Calu3 (cell line): ENCODE measurements at regions of chr11 and their contacts with region 1.

Region 1: GRCh38 chr11:66659763-66660162 is 17.9 kb downstream of the RBM4B start:
- DNase-seq: no peak
- H3K4me3 Mint-ChIP-seq: no peak overlapping the region
- H3K27ac Mint-ChIP-seq: peak overlapping the region; percentile 52
- H3K4me1 Mint-ChIP-seq: no peaks in the 10 kb centered on the region
- H3K27me3 Mint-ChIP-seq: no peaks in the 10 kb centered on the region
- CTCF ChIP-seq: no peak

Region 2: GRCh38 chr11:66616379-66617154 is 43.2 kb before region 1 on chr11 and contains the start of gene RBM14:
- CTCF ChIA-PET with region 1: interaction called, 11 read pairs
- intact Hi-C with region 1: no loop called
- DNase-seq: peak; percentile 99
- H3K4me3 Mint-ChIP-seq: peak within 1 kb of the TSS; percentile 99
- H3K27ac Mint-ChIP-seq: peak within 1 kb of the TSS; percentile 99
- H3K4me1 Mint-ChIP-seq: peaks cover 22% of the 10 kb centered on the region
- H3K27me3 Mint-ChIP-seq: no peaks in the 10 kb centered on the region
- CTCF ChIP-seq: no peak
- total RNA-seq, gene RBM14: 102 and 107 TPM in 2 replicates

Region 3: DNA sequence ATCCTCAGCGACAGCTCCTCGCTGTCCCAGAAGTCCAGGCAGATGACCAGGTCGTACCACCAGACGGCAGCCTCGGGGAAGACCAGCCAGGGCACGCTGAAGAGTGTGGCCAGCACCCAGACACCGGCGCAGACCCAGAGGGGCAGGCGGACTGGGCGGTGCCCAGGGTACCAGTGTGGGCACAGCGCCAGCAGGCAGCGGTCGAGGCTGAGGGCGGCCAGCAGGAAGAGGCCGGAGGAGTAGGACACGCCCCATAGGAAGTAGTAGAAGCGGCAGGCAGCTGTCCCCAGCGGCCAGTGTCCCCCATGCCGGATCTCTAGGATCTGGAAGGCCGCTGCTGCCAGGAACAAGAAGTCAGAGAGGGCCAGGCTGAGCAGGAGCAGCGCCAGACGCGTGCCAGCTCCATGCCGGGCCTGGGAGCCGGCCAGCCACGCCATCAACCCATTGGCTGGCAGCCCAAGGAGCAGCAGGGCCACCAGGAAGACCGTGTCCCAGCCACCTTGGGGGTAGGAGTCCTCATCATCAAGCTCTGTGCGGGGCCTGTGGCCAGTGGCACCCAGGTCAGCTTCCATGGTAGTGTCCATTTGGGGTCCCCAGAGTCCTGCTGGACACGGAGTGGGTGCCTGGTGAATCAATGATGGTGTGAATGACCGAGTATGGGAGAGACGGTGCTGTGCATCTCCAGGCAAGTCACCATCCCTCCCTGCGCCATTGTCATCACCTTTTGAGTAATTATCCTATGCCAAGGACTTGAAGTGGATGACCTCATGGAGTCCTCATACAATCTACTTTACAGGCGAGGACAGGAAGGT is 792.6 kb after region 1 on chr11 and contains the start of gene GPR152:
- CTCF ChIA-PET with region 1: no interaction called
- intact Hi-C with region 1: no loop called
- DNase-seq: peak; percentile 90
- H3K4me3 Mint-ChIP-seq: peak within 1 kb of the TSS; percentile 75
- H3K27ac Mint-ChIP-seq: peak within 1 kb of the TSS; percentile 78
- H3K4me1 Mint-ChIP-seq: peaks cover 15% of the 10 kb centered on the region
- H3K27me3 Mint-ChIP-seq: no peaks in the 10 kb centered on the region
- CTCF ChIP-seq: no peak
- total RNA-seq, gene GPR152: not detected in 2 replicates